ENCODE measurements at regions of chr14 and their contacts with region 1.

Region 1: DNA sequence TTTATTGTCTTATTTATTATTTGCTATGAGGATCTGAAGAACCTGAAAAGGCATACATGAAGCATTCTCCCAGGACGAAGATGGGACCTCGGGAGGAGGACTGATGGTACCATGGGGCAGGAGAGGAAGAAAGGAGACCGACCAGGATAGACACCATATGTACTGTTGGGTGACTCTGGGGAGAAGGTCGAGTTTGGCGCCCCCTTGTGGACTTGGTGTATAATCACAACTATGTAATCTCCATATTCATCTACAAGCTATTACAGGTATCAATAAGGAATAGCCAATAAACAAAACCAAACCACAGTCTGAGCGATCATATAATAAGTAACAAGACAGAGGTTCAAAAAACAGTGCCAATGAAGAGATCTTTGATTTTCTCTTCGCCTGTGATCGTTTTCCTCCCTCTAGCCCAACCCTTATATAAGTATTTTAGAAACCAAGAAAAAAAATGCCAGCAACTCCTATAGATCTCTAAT is 139.1 kb downstream of the SPTSSA start:
- DNase-seq: no peak
- ATAC-seq: peak; percentile 95
- H3K4me3 ChIP-seq: no peak overlapping the region
- H3K27ac ChIP-seq: no peak overlapping the region
- H3K4me1 ChIP-seq: no peaks in the 10 kb centered on the region
- H3K27me3 ChIP-seq: no peaks in the 10 kb centered on the region
- CTCF ChIP-seq: peak; percentile 70 to 72 (median 71)
- EP300 ChIP-seq: no peak
- POLR2A ChIP-seq: no peak
- RAD21 ChIP-seq: no peak

Region 2: DNA sequence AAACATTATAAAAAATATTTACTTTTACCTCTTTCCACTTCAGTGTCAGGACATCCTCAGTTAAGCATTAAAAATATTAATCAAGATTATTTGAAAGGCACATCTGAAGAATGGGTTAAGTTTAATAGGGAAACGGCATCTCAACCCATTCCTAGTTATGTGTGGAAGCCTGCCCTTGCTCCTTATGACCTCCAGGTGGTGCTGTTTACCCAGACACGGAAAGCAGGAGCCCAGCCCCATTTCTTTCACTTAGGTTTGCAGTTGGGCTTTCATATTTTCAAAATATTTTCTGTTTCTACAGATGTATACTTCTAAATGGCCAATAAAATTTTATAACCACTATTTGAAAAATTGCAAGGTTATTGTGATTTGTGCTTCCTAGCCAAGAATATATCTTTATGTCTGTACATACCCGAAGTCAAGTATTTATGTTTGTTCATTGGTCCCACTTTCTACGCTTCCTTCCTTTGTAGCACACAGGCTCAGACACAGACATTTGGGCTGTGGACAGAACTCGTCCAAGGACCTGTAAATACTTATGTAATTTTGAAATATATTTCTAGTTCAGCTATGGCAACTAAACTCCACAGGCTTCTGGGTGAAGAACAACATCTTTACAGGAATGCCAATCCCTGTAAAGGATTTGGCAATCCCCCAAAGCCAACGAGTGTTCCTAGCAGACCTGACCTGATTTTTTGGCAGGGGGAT is 1746.7 kb before region 1 on chr14:
- CTCF ChIA-PET with region 1: interaction called, 7 read pairs
- POLR2A ChIA-PET with region 1: no interaction called
- RAD21 ChIA-PET with region 1: interaction called, 4 read pairs
- SMC1A ChIA-PET with region 1: no interaction called
- in situ Hi-C with region 1: loop called (anchors 5 kb)
- intact Hi-C with region 1: loop called (anchors 1 kb)
- DNase-seq: no peak
- ATAC-seq: peak; percentile 86
- H3K4me3 ChIP-seq: no peak overlapping the region
- H3K27ac ChIP-seq: no peak overlapping the region
- H3K4me1 ChIP-seq: peaks cover 17% of the 10 kb centered on the region
- H3K27me3 ChIP-seq: no peaks in the 10 kb centered on the region
- CTCF ChIP-seq: peak; percentile 92 to 95 (median 92)
- EP300 ChIP-seq: no peak
- POLR2A ChIP-seq: no peak
- RAD21 ChIP-seq: peak; percentile 98

Region 3: DNA sequence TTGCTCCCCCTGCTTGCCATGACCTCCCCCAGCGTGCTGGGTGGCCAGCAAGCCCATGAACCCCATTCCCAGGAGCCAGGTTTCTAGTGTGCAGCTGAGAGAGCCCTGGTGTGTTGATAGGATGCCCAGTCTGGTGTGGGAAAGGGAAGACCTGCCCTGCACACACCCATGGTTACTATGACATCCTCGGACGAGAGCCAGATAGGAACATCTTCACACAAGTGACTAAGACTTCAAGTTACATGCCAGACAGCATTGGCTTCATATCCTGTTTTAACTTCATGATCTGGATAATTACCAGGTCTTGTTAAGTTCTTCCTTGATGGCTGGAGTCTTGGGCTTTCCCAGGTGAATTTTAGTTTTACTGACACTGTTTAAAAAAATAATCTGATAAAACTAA is 175.5 kb before region 1 on chr14:
- CTCF ChIA-PET with region 1: no interaction called
- POLR2A ChIA-PET with region 1: no interaction called
- RAD21 ChIA-PET with region 1: no interaction called
- SMC1A ChIA-PET with region 1: no interaction called
- in situ Hi-C with region 1: no loop called
- intact Hi-C with region 1: no loop called
- DNase-seq: no peak
- ATAC-seq: no peak
- H3K4me3 ChIP-seq: no peak overlapping the region
- H3K27ac ChIP-seq: no peak overlapping the region
- H3K4me1 ChIP-seq: no peaks in the 10 kb centered on the region
- H3K27me3 ChIP-seq: no peaks in the 10 kb centered on the region
- CTCF ChIP-seq: no peak
- EP300 ChIP-seq: no peak
- POLR2A ChIP-seq: no peak
- RAD21 ChIP-seq: no peak

Region 4: DNA sequence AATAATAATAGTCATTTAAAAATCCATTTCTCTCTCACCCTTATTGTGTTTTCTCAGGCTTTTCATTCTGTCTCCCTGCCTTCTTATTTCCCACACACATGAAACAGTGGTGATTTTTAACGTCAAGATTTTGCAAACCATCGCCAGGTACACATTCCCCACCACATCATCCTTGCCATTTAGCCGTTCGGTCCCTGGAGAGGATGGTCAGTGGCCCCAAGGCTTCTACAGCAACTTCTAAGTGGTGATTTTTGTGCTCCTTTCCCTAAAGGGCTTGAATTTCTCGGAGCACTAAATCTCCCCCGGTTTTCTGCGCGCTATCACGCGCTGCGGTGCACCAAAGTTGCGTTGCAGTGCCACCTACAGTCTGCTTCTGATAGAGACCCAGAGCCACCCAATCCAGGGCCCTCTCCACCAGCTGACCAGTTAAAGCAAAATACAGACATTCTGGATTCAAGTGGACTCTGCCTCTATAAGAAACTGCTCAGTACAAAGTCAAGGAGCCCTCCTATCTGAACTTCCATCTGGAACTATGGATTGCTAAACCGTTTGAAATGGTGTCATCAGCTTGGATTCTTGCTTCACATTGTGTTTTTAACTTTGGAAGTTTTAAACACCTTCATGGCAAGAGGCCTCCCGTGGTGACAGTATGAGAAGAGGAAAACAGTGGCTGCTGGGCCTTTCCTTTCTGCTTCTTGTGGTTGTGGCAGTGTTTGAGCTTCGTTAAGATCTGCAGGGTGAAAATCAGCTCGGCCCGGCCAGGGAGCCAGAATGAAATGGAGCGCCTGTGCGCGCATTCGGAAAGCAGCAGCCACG is 94.9 kb before region 1 on chr14:
- CTCF ChIA-PET with region 1: interaction called, 10 read pairs
- POLR2A ChIA-PET with region 1: no interaction called
- RAD21 ChIA-PET with region 1: no interaction called
- SMC1A ChIA-PET with region 1: interaction called, 3 read pairs
- in situ Hi-C with region 1: no loop called
- intact Hi-C with region 1: no loop called
- DNase-seq: no peak
- ATAC-seq: peak; percentile 96
- H3K4me3 ChIP-seq: no peak overlapping the region
- H3K27ac ChIP-seq: no peak overlapping the region
- H3K4me1 ChIP-seq: no peaks in the 10 kb centered on the region
- H3K27me3 ChIP-seq: peaks cover 0 to 2% of the 10 kb centered on the region in 2 experiments; a peak in 1 of 4 replicates
- CTCF ChIP-seq: peak; percentile 71 to 78 (median 72); a peak in 5 of 6 replicates
- EP300 ChIP-seq: no peak
- POLR2A ChIP-seq: no peak
- RAD21 ChIP-seq: peak; percentile 81

Region 5: DNA sequence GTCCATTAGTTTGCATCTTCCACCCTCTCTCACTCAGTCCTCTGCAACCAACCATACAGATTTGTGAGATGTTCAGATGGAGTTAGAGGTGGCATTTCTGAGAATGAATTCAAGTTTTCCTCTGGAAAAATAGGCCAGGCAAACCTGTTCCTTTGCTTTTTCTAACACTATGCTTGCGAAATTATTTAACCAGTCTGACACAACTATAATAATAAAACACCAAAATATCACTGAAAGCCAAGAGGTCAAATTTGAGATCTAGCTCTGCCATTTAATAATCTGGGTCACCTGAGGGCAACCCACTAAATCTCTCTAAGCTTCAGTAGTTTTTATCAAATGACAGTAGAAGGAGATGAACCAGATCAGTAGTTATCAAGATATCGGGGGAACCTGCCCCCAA is 42.4 kb before region 1 on chr14:
- CTCF ChIA-PET with region 1: no interaction called
- POLR2A ChIA-PET with region 1: no interaction called
- RAD21 ChIA-PET with region 1: no interaction called
- SMC1A ChIA-PET with region 1: no interaction called
- in situ Hi-C with region 1: no loop called
- intact Hi-C with region 1: no loop called
- DNase-seq: no peak
- ATAC-seq: no peak
- H3K4me3 ChIP-seq: no peak overlapping the region
- H3K27ac ChIP-seq: no peak overlapping the region
- H3K4me1 ChIP-seq: no peaks in the 10 kb centered on the region
- H3K27me3 ChIP-seq: no peaks in the 10 kb centered on the region
- CTCF ChIP-seq: no peak
- EP300 ChIP-seq: no peak
- POLR2A ChIP-seq: no peak
- RAD21 ChIP-seq: no peak

Region 6: GRCh38 chr14:34300882-34301734 is 21.9 kb before region 1 on chr14:
- CTCF ChIA-PET with region 1: interaction called, 22 read pairs
- POLR2A ChIA-PET with region 1: no interaction called
- RAD21 ChIA-PET with region 1: no interaction called
- SMC1A ChIA-PET with region 1: interaction called, 3 read pairs
- in situ Hi-C with region 1: no loop called
- intact Hi-C with region 1: no loop called
- DNase-seq: peak; percentile 7
- ATAC-seq: peak; percentile 67
- H3K4me3 ChIP-seq: no peak overlapping the region
- H3K27ac ChIP-seq: no peak overlapping the region
- H3K4me1 ChIP-seq: no peaks in the 10 kb centered on the region
- H3K27me3 ChIP-seq: no peaks in the 10 kb centered on the region
- CTCF ChIP-seq: peak; percentile 51 to 59 (median 56); a peak in 5 of 6 replicates
- EP300 ChIP-seq: no peak
- POLR2A ChIP-seq: no peak
- RAD21 ChIP-seq: peak; percentile 62

Region 7: DNA sequence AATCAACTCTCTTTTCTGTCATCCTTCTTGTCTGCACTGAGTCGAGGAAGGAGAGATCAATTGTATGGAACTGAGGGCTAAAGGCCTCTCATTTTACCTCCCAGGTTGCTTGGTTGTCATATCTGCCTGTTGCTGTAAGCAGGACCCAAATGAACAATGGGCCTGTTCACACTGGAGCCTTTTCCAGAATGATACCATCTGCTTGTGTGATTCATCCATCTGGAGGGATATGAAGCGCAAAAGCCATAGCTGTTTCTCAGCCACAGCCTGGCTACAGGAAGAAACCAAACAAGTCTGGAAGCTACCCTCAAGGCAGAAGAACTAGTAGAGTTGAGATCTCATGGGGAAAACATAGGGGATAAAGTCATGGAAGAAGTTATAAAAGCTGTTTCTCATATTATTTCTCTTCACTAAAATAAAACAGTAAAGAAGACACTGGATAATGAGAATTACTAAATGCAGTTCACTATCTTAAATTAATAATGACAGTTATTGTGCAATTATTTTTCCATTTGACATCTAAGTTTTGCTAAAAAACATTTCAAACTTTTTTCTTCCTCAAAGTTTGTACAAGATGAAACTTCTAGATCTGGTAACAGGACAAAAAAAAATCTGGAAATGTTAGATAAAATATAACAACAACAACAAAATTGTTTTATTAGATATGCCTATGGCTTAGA is 32.7 kb after region 1 on chr14:
- CTCF ChIA-PET with region 1: interaction called, 10 read pairs
- POLR2A ChIA-PET with region 1: no interaction called
- RAD21 ChIA-PET with region 1: no interaction called
- SMC1A ChIA-PET with region 1: no interaction called
- in situ Hi-C with region 1: no loop called
- intact Hi-C with region 1: no loop called
- DNase-seq: no peak
- ATAC-seq: no peak
- H3K4me3 ChIP-seq: no peak overlapping the region
- H3K27ac ChIP-seq: no peak overlapping the region
- H3K4me1 ChIP-seq: no peaks in the 10 kb centered on the region
- H3K27me3 ChIP-seq: no peaks in the 10 kb centered on the region
- CTCF ChIP-seq: no peak
- EP300 ChIP-seq: no peak
- POLR2A ChIP-seq: no peak
- RAD21 ChIP-seq: no peak

Region 8: GRCh38 chr14:34496679-34497513 is 173.9 kb after region 1 on chr14:
- CTCF ChIA-PET with region 1: interaction called, 9 read pairs
- POLR2A ChIA-PET with region 1: no interaction called
- RAD21 ChIA-PET with region 1: no interaction called
- SMC1A ChIA-PET with region 1: no interaction called
- in situ Hi-C with region 1: no loop called
- intact Hi-C with region 1: loop called (anchors 2 kb)
- DNase-seq: no peak
- ATAC-seq: no peak
- H3K4me3 ChIP-seq: no peak overlapping the region
- H3K27ac ChIP-seq: no peak overlapping the region
- H3K4me1 ChIP-seq: no peaks in the 10 kb centered on the region
- H3K27me3 ChIP-seq: no peaks in the 10 kb centered on the region
- CTCF ChIP-seq: no peak
- EP300 ChIP-seq: no peak
- POLR2A ChIP-seq: no peak
- RAD21 ChIP-seq: no peak